ENCODE measurements at regions of chr1 and their contacts with region 1.

Region 1: GRCh38 chr1:206761159-206761768 is 9.3 kb upstream of the IL19 start:
- DNase-seq: no peak
- ATAC-seq: no peak
- H3K4me3 Mint-ChIP-seq: no peak overlapping the region
- H3K27ac Mint-ChIP-seq: peak overlapping the region in 2 of 10 donors; percentile 47 to 54
- H3K4me1 Mint-ChIP-seq: peaks cover 15 to 37% (median 30%) of the 10 kb centered on the region in 4 donors
- H3K27me3 Mint-ChIP-seq: peaks cover 0 to 3% (median 0%) of the 10 kb centered on the region in 5 donors

Region 2: DNA sequence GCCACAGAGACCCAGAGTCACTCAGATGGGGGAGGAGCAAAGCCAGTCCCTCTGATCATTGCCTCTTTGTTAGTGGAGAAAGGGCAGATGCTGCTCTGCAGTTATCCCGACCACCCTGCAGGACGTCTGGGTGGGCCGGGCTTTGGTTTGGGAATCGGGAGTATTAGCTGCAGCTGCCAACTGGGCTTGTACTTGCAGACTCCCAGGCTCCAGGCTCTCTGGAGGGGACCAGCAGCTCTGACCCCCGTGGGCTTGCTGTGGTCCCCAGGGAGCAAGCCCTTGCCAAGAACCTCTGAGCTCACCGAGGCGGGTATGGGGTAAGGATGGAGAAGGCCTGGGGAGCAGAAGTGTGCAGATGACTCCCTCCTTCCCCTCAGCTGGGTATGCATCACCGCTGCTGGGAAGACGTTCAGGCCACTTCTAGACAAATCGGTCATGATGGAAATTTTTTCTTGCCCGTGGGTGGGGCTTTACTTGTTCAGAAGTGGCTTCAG is 54.9 kb before region 1 on chr1:
- POLR2A ChIA-PET with region 1: no interaction called
- DNase-seq: no peak
- ATAC-seq: no peak
- H3K4me3 Mint-ChIP-seq: peak overlapping the region in 2 of 10 donors; percentile 35 to 70
- H3K27ac Mint-ChIP-seq: peak overlapping the region in 4 of 10 donors; percentile 7 to 41 (median 22)
- H3K4me1 Mint-ChIP-seq: peaks cover 62 to 90% (median 88%) of the 10 kb centered on the region in 4 donors
- H3K27me3 Mint-ChIP-seq: no peaks in the 10 kb centered on the region

Region 3: GRCh38 chr1:206722751-206723459 is 38.4 kb before region 1 on chr1:
- POLR2A ChIA-PET with region 1: no interaction called
- DNase-seq: no peak
- ATAC-seq: no peak
- H3K4me3 Mint-ChIP-seq: no peak overlapping the region
- H3K27ac Mint-ChIP-seq: peak overlapping the region in 4 of 10 donors; percentile 31 to 62 (median 46)
- H3K4me1 Mint-ChIP-seq: peaks cover 17 to 81% (median 74%) of the 10 kb centered on the region in 4 donors
- H3K27me3 Mint-ChIP-seq: no peaks in the 10 kb centered on the region

Region 4: DNA sequence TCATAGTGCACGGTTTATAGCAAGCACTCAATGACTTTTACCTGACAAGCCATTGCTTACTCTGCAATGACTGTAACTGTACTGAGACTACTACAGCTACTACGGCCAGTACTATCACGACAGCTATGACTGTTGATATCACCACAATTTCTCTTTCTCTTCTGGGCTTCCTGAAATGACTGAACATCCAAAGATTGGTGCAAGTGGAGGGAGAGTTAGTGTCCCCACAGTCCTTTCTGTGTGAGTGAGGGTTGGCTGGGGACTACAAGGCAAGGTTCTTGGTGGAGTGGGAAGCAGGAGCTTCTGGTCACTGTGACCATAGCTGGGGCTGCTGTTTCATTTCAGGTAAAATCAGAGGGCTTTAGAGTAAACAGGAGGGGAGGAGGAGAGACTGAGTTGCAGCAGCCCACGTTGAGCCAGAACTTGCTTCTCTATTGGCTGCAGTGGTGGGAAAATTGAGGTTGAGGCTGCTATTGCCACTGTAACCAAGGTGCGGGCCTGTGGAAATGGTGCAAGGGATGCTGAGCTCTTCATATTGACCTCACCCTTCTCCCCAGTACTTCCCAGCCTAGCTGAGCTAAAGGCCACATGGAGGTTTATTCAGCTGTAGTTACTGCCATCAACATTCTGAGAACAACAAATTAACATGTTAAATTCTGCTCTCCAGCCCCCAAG is 25.1 kb after region 1 on chr1:
- POLR2A ChIA-PET with region 1: interaction called, 13 read pairs
- DNase-seq: no peak
- ATAC-seq: no peak
- H3K4me3 Mint-ChIP-seq: peak overlapping the region in 1 of 10 donors; percentile 0
- H3K27ac Mint-ChIP-seq: peak overlapping the region in 2 of 10 donors; percentile 1
- H3K4me1 Mint-ChIP-seq: peaks cover 42 to 84% (median 76%) of the 10 kb centered on the region in 4 donors
- H3K27me3 Mint-ChIP-seq: no peaks in the 10 kb centered on the region